ENCODE measurements at regions of chr5 and their contacts with region 1.

Region 1: GRCh38 chr5:32613050-32613672 is 27.8 kb downstream of the SUB1 start:
- DNase-seq: peak; percentile 79 to 82
- H3K4me3 ChIP-seq: no peak overlapping the region
- H3K27ac ChIP-seq: peak overlapping the region in 1 of 2 donors; percentile 30
- H3K4me1 ChIP-seq: no peaks in the 10 kb centered on the region
- H3K27me3 ChIP-seq: no peaks in the 10 kb centered on the region
- CTCF ChIP-seq: peak; percentile 77 to 92 (median 86)
- POLR2A ChIP-seq: no peak

Region 2: DNA sequence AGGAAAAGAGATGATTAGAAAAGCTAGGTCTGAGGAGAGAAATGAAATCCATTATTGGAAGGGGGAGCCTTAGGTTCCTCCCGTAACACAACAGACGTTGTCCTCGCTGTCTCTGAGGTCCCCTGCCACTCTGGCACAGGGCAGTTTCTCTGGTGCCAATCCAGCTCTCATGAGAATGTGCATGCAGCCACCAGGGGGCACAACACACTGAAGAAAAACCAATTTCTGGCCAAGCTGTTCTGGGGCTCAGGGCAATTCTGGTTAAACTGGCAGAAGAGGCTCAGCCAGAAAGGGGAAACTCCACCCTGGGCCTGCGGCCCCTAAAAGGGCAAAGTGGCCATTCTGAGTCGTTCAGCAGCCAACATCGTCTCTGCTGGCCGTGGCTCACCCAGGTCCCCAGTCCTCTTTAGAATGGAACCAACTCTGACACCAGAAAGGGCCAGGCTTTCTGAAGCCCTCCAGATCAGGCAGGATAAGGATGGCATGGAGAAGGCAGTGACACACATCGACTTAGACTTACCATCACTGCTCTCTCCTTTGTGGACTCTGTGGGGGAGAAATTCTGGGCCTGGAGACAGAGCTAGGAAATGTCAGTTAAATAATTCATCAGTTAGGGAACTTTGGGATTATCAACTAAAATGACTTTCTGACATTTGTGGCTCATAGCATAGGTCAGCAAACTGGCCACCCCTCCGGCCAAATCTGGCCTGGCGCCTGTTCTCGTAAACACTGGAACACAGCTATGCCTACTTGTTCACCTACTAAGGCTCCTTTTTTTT is 380.5 kb before region 1 on chr5:
- intact Hi-C with region 1: loop called (anchors 5 kb)
- DNase-seq: peak; percentile 75
- H3K4me3 ChIP-seq: no peak overlapping the region
- H3K27ac ChIP-seq: peak overlapping the region; percentile 36 to 46
- H3K4me1 ChIP-seq: peaks cover 0 to 2% of the 10 kb centered on the region in 2 donors
- H3K27me3 ChIP-seq: no peaks in the 10 kb centered on the region
- CTCF ChIP-seq: peak; percentile 63 to 84 (median 82)
- POLR2A ChIP-seq: no peak